ENCODE measurements at regions of chr12 and their contacts with region 1.

Region 1: DNA sequence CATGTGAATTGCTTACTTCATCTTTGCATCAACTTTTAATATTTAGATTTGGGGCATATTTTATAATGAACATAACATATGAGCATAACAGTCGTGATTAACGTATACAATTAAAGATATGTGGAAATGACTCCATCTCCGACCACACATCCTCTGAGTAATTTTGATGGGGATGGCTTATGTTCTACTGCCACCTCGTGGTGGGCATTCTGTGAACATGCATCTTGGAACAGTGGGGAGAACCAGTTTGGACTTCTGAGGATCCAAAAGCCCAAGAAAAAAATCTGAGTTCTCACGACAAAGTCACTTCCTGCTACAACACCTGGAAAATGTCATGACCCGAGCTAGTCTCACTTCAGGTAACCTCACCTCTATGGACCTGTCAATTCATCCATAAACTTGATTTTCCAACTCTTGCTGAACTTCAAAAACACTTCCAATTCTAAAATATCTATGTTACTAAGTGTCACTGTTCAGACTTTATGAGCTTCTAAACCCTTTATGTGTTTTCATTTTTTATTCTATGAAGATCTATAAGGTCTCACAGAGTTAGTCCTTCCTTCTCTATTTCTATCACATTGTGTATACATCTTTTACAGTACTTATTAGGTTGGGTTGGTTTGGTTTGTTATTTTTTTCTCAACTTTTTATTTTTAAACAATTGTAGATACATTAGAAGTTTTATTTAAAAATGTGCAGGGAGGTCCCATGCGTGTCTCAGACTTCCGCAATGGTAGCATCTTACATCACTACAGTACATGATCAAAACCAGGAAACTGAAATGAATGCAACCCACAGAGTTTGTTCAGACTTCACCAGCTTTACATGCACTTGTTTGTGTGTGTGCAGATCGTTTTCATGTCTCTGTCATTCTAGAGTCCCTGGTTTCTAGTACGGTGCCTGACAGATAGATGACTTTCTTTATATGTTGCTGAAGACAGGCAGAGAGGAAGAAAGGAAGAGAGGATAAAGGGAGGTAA is 38.2 kb upstream of the STAB2 start:
- DNase-seq: peak in 1 of 2 donors; percentile 74
- H3K4me3 ChIP-seq: no peak overlapping the region
- H3K27ac ChIP-seq: no peak overlapping the region
- H3K4me1 ChIP-seq: no peaks in the 10 kb centered on the region
- H3K27me3 ChIP-seq: no peaks in the 10 kb centered on the region
- CTCF ChIP-seq: peak; percentile 44 to 76 (median 57)

Region 2: DNA sequence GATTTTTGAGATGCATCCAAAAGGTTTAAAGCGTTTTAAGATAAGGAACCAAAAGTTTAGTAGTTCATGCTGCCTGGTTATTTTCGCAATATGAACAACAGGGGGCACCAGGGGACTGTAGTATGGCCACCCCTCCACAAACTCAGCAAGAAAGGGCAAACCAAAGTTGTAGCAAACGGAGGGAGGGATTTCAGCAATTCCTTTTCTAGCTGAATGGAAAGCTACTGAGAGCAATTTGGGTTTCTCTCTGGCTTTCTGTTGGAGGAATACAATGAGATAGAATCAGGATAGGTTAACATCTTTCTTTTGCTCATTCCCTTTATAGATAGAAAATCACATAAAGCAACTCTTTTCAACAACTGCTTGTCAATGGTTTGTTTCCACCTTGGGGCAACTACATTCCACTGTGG is 1609.1 kb before region 1 on chr12:
- intact Hi-C with region 1: loop called (anchors 10 kb)
- DNase-seq: peak in 1 of 2 donors; percentile 65
- H3K4me3 ChIP-seq: no peak overlapping the region
- H3K27ac ChIP-seq: no peak overlapping the region
- H3K4me1 ChIP-seq: no peaks in the 10 kb centered on the region
- H3K27me3 ChIP-seq: no peaks in the 10 kb centered on the region
- CTCF ChIP-seq: peak; percentile 43 to 63 (median 50)

Region 3: GRCh38 chr12:102883204-102883799 is 665.6 kb before region 1 on chr12:
- intact Hi-C with region 1: loop called (anchors 2 kb)
- DNase-seq: no peak
- H3K4me3 ChIP-seq: no peak overlapping the region
- H3K27ac ChIP-seq: no peak overlapping the region
- H3K4me1 ChIP-seq: no peaks in the 10 kb centered on the region
- H3K27me3 ChIP-seq: no peaks in the 10 kb centered on the region
- CTCF ChIP-seq: peak in 2 of 3 experiments; percentile 41 to 60

Region 4: DNA sequence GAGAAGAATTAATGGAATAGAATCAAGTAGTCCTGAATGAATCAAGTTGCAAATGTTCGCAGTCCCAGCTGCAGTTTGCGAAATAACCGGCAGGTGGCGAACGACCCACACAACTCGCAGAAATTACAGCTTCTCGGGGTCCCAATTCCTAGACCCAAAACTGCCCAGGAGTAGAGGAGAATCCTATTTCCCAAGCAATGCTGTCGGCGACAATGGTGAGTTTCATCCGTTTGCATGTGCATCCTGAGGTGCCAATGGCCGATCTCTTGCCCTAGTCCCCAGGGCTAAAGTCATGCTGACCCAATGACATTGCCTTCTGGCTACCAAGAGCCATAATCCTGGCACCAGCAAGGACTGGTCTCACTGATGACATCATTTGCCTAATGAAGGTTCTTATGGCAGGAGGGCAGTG is 600.0 kb before region 1 on chr12:
- intact Hi-C with region 1: loop called (anchors 5 kb)
- DNase-seq: no peak
- H3K4me3 ChIP-seq: no peak overlapping the region
- H3K27ac ChIP-seq: no peak overlapping the region
- H3K4me1 ChIP-seq: no peaks in the 10 kb centered on the region
- H3K27me3 ChIP-seq: no peaks in the 10 kb centered on the region
- CTCF ChIP-seq: peak; percentile 25 to 64 (median 35)